ENCODE measurements at regions of chr16 and their contacts with region 1.

Region 1: GRCh38 chr16:1670866-1671265 is 7.2 kb upstream of the JPT2 start:
- H3K4me3 ChIP-seq: no peak overlapping the region
- H3K27ac ChIP-seq: no peak overlapping the region
- H3K4me1 ChIP-seq: no peaks in the 10 kb centered on the region
- CTCF ChIP-seq: no peak

Region 2: GRCh38 chr16:1518626-1519135 is 152.2 kb before region 1 on chr16:
- CTCF ChIA-PET with region 1: no interaction called
- POLR2A ChIA-PET with region 1: no interaction called
- H3K4me3 ChIP-seq: no peak overlapping the region
- H3K27ac ChIP-seq: no peak overlapping the region
- H3K4me1 ChIP-seq: no peaks in the 10 kb centered on the region
- CTCF ChIP-seq: no peak

Region 3: GRCh38 chr16:1650131-1650530 is 20.7 kb before region 1 on chr16:
- CTCF ChIA-PET with region 1: no interaction called
- POLR2A ChIA-PET with region 1: interaction called, 10 read pairs
- H3K4me3 ChIP-seq: no peak overlapping the region
- H3K27ac ChIP-seq: no peak overlapping the region
- H3K4me1 ChIP-seq: peaks cover 2% of the 10 kb centered on the region; the same call in 1 of the 2 replicates
- CTCF ChIP-seq: no peak

Region 4: GRCh38 chr16:1696863-1697262 is 26.0 kb after region 1 on chr16:
- CTCF ChIA-PET with region 1: no interaction called
- POLR2A ChIA-PET with region 1: no interaction called
- H3K4me3 ChIP-seq: no peak overlapping the region
- H3K27ac ChIP-seq: no peak overlapping the region
- H3K4me1 ChIP-seq: no peaks in the 10 kb centered on the region
- CTCF ChIP-seq: no peak

Measured in HEK293 (cell line).